K562 (cell line): ENCODE measurements at regions of chr17 and their contacts with region 1.

Region 1: GRCh38 chr17:82037113-82037888 is at the start of gene DCXR:
- DNase-seq: peak; percentile 95 to 99 (median 97)
- ATAC-seq: peak; percentile 95
- H3K4me3 ChIP-seq: peak within 1 kb of the TSS; percentile 97
- H3K27ac ChIP-seq: peak within 1 kb of the TSS; percentile 98
- H3K4me1 ChIP-seq: peaks cover 26 to 68% of the 10 kb centered on the region in 2 experiments
- H3K27me3 ChIP-seq: no peaks in the 10 kb centered on the region
- CTCF ChIP-seq: peak; percentile 81 to 95 (median 93)
- EP300 ChIP-seq: no peak
- POLR2A ChIP-seq: peak; percentile 99
- RAD21 ChIP-seq: peak; percentile 31 to 50
- polyA plus RNA-seq, gene DCXR: 21.3 to 50.3 TPM

Region 2: GRCh38 chr17:81401723-81402529 is 635.4 kb before region 1 on chr17:
- CTCF ChIA-PET with region 1: no interaction called
- POLR2A ChIA-PET with region 1: no interaction called
- in situ Hi-C with region 1: no loop called
- intact Hi-C with region 1: no loop called
- DNase-seq: peak; percentile 53 to 84 (median 70)
- ATAC-seq: peak; percentile 79
- H3K4me3 ChIP-seq: peak overlapping the region; percentile 84; the same call in 1 of the 2 replicates
- H3K27ac ChIP-seq: peak overlapping the region; percentile 94
- H3K4me1 ChIP-seq: peaks cover 22 to 78% of the 10 kb centered on the region in 2 experiments
- H3K27me3 ChIP-seq: no peaks in the 10 kb centered on the region
- CTCF ChIP-seq: peak; percentile 69 to 78 (median 72)
- EP300 ChIP-seq: no peak
- POLR2A ChIP-seq: no peak
- RAD21 ChIP-seq: peak in 1 of 2 experiments; percentile 49; a peak in 3 of 4 replicates

Region 3: DNA sequence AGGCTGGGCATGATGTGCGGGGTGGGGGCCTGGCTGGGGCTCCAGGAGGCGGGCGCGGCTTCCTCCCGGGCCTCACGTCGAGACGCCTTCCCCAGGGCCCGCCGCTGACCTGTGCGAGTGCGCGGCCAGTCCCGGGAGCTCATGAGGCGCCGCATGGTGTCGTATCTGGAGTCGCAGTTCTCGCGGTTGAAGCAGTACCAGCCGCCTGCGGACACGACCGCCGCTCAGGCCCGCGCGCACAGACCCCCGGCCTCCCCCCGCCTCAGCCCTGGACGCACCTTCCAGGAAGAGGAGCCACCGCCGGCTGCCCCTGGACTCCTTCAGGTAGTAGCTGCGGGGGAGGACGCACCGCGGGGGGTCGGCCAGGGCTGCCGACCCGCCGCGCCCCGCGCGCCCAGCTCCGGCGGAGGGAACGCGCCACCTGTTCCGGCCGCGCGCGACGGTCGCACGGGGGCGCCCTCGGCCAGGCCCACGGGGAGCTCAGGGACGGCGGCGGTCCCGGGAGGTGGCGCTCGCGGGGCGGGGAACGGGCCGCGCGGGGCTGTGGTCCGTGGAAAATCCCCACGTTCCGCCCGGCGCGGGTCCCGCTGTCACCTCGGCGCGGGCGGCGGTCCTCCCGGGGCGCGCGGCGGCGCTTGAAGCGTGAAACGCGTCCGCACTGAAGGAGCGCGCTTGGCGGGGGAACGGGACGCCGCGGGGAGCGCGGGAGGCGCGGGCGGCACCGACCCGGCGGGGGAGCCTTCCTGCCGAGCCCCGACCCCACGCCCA is 77.8 kb before region 1 on chr17:
- CTCF ChIA-PET with region 1: interaction called, 14 read pairs
- POLR2A ChIA-PET with region 1: interaction called, 4 read pairs
- in situ Hi-C with region 1: no loop called
- intact Hi-C with region 1: no loop called
- DNase-seq: peak; percentile 85 to 88 (median 86)
- ATAC-seq: peak; percentile 84
- H3K4me3 ChIP-seq: peak overlapping the region; percentile 58
- H3K27ac ChIP-seq: peak overlapping the region; percentile 68
- H3K4me1 ChIP-seq: peaks cover 7 to 73% of the 10 kb centered on the region in 2 experiments; a peak in 4 of 5 replicates
- H3K27me3 ChIP-seq: no peaks in the 10 kb centered on the region
- CTCF ChIP-seq: peak; percentile 65 to 99 (median 99)
- EP300 ChIP-seq: no peak
- POLR2A ChIP-seq: peak; percentile 56; the same call in 1 of the 2 replicates
- RAD21 ChIP-seq: peak; percentile 92 to 95

Region 4: DNA sequence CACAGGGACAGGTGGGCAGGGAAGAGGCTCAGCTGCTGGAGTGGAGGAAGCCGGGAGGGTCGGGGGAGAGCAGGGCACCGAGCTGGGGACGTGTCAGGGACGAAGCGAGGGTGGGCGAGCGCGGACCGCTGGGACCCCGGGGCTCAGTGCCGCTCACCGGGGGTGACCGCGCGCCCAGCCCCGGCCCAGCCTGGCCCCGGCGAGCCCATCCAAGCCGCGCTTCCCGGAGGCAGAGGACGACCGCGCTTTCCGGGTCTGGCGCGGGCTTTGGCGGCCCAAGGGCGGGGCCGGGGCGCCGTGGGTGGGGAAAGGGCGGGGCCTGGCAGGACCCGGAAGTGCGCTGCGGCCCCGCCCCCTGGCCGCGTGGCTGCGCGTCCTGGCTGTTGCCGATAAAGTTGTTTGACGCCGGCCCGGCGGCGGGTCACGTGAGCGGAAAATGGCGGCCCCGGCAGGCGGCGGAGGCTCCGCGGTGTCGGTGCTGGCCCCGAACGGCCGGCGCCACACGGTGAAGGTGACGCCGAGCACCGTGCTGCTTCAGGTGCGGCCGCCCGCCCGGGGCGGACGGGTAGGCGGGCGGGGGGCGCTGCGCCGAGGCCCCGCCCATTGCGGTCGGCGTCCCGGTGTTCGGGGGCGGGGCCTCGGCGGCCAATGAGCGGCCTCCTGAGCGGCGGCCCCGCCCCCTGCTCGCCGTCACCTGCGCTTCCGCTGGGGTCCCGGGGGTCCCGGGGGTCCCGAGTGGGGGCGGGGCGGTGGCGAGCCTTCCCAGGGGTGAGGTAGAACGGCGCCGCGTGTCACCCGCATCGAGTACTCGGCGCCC is 59.9 kb before region 1 on chr17 and contains the start of gene ASPSCR1:
- CTCF ChIA-PET with region 1: no interaction called
- POLR2A ChIA-PET with region 1: no interaction called
- in situ Hi-C with region 1: no loop called
- intact Hi-C with region 1: no loop called
- DNase-seq: peak; percentile 91 to 98 (median 94)
- ATAC-seq: peak; percentile 91
- H3K4me3 ChIP-seq: peak within 1 kb of the TSS; percentile 88
- H3K27ac ChIP-seq: peak within 1 kb of the TSS; percentile 98
- H3K4me1 ChIP-seq: peaks cover 23 to 27% of the 10 kb centered on the region in 2 experiments
- H3K27me3 ChIP-seq: no peaks in the 10 kb centered on the region
- CTCF ChIP-seq: no peak
- EP300 ChIP-seq: peak; percentile 49; the same call in 1 of the 2 replicates
- POLR2A ChIP-seq: peak; percentile 92
- RAD21 ChIP-seq: no peak
- polyA plus RNA-seq, gene ASPSCR1: 0.90 to 2.2 TPM

Region 5: GRCh38 chr17:82012640-82013295 is 24.5 kb before region 1 on chr17:
- CTCF ChIA-PET with region 1: no interaction called
- POLR2A ChIA-PET with region 1: no interaction called
- in situ Hi-C with region 1: no loop called
- intact Hi-C with region 1: no loop called
- DNase-seq: no peak
- ATAC-seq: no peak
- H3K4me3 ChIP-seq: no peak overlapping the region
- H3K27ac ChIP-seq: no peak overlapping the region
- H3K4me1 ChIP-seq: peaks cover 0 to 87% of the 10 kb centered on the region in 2 experiments; a peak in 3 of 5 replicates
- H3K27me3 ChIP-seq: no peaks in the 10 kb centered on the region
- CTCF ChIP-seq: no peak
- EP300 ChIP-seq: no peak
- POLR2A ChIP-seq: no peak
- RAD21 ChIP-seq: no peak

Region 6: GRCh38 chr17:82022981-82023374 is 14.3 kb before region 1 on chr17 and contains the start of gene LRRC45:
- CTCF ChIA-PET with region 1: no interaction called
- POLR2A ChIA-PET with region 1: interaction called, 51 read pairs
- in situ Hi-C with region 1: no loop called
- intact Hi-C with region 1: no loop called
- DNase-seq: peak; percentile 96 to 99 (median 98)
- ATAC-seq: peak; percentile 94
- H3K4me3 ChIP-seq: peak within 1 kb of the TSS; percentile 91
- H3K27ac ChIP-seq: peak within 1 kb of the TSS; percentile 77
- H3K4me1 ChIP-seq: peaks cover 14 to 89% of the 10 kb centered on the region in 2 experiments
- H3K27me3 ChIP-seq: no peaks in the 10 kb centered on the region
- CTCF ChIP-seq: no peak
- EP300 ChIP-seq: no peak
- POLR2A ChIP-seq: no peak
- RAD21 ChIP-seq: no peak
- polyA plus RNA-seq, gene LRRC45: not detected

Region 7: GRCh38 chr17:82054351-82055022 is 17.2 kb after region 1 on chr17:
- CTCF ChIA-PET with region 1: no interaction called
- POLR2A ChIA-PET with region 1: interaction called, 11 read pairs
- in situ Hi-C with region 1: no loop called
- intact Hi-C with region 1: no loop called
- DNase-seq: no peak
- ATAC-seq: no peak
- H3K4me3 ChIP-seq: no peak overlapping the region
- H3K27ac ChIP-seq: no peak overlapping the region
- H3K4me1 ChIP-seq: peaks cover 6 to 90% of the 10 kb centered on the region in 2 experiments; a peak in 3 of 5 replicates
- H3K27me3 ChIP-seq: no peaks in the 10 kb centered on the region
- CTCF ChIP-seq: no peak
- EP300 ChIP-seq: no peak
- POLR2A ChIP-seq: no peak
- RAD21 ChIP-seq: no peak

Region 8: GRCh38 chr17:82098072-82098821 is 60.9 kb after region 1 on chr17 and contains the start of gene FASN:
- CTCF ChIA-PET with region 1: no interaction called
- POLR2A ChIA-PET with region 1: interaction called, 11 read pairs
- in situ Hi-C with region 1: no loop called
- intact Hi-C with region 1: loop called (anchors 5 kb)
- DNase-seq: peak; percentile 96 to 99 (median 98)
- ATAC-seq: peak; percentile 78
- H3K4me3 ChIP-seq: peak within 1 kb of the TSS; percentile 97
- H3K27ac ChIP-seq: peak within 1 kb of the TSS; percentile 95
- H3K4me1 ChIP-seq: peaks cover 36 to 92% of the 10 kb centered on the region in 2 experiments
- H3K27me3 ChIP-seq: no peaks in the 10 kb centered on the region
- CTCF ChIP-seq: peak; percentile 41 to 77 (median 72); a peak in 5 of 6 replicates
- EP300 ChIP-seq: no peak; the same call in 1 of the 2 replicates
- POLR2A ChIP-seq: peak; percentile 84
- RAD21 ChIP-seq: peak; percentile 22 to 42; a peak in 3 of 4 replicates
- polyA plus RNA-seq, gene FASN: 0.15 to 0.20 TPM